ENCODE measurements at regions of chr20 and their contacts with region 1.

Region 1: DNA sequence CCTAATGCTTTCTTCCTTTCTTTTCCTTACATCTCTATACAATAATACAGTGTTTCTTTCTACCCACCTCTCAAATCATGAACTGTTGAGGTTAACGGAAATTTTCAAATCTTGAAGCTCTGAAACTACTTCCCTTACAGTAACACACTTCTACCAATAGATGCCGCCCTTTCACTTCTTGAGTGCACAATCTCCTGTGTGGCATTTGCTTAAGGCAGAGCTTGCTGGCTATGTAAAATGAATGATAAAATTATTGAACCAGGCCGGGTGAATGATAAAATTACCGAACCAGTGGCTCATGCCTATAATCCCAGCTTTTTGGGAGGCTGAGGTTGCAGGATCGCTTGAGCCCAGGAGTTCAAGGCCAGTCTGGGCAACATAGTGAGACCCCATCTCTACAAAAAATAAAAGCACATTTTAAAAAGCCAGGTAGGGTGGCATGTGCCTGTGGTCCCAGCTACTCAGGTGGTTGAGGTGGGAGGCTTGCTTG is 56.8 kb downstream of the KCNS1 start:
- DNase-seq: peak; percentile 57
- ATAC-seq: peak; percentile 80
- H3K4me3 ChIP-seq: no peak overlapping the region
- H3K27ac ChIP-seq: no peak overlapping the region
- H3K4me1 ChIP-seq: peaks cover 14 to 19% of the 10 kb centered on the region in 2 experiments
- H3K27me3 ChIP-seq: no peaks in the 10 kb centered on the region
- CTCF ChIP-seq: peak; percentile 76 to 89 (median 83)
- POLR2A ChIP-seq: no peak
- RAD21 ChIP-seq: peak; percentile 84

Region 2: DNA sequence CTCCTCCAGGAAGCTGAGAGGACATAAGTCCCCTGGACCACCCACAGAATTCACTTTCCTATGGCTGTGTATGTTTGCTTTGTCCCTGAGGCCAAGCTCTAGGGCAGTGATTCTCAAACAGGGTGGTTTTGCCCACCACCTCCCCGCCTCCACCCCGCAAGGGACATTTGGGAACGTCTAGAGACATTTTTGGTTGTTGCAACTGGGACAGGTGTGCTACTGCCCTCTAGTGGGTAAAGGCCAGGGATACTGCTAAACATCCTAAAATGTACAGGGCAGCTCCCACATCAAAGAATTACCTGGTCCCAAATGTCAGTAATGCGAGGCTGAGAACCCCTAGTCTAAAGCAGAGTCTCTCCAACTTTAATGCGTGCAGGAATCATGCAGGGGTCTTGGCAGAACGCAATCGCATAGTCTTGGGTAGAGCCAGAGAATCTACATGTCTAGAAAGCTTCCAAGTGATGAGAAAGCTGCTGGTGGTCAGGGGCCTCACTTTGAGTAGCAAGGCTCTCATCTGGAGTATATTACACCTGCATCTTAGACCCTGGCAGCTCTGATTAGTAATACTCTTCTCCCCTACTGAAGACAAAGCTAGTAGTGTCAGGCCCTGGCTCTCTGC is 51.7 kb after region 1 on chr20:
- CTCF ChIA-PET with region 1: interaction called, 92 read pairs
- POLR2A ChIA-PET with region 1: no interaction called
- RAD21 ChIA-PET with region 1: interaction called, 7 to 12 read pairs
- intact Hi-C with region 1: loop called (anchors 1 kb)
- DNase-seq: peak; percentile 41
- ATAC-seq: peak; percentile 85
- H3K4me3 ChIP-seq: no peak overlapping the region
- H3K27ac ChIP-seq: no peak overlapping the region
- H3K4me1 ChIP-seq: no peaks in the 10 kb centered on the region
- H3K27me3 ChIP-seq: no peaks in the 10 kb centered on the region
- CTCF ChIP-seq: peak; percentile 68 to 81 (median 74)
- POLR2A ChIP-seq: no peak
- RAD21 ChIP-seq: peak; percentile 83

Region 3: GRCh38 chr20:45111799-45112471 is 67.8 kb after region 1 on chr20:
- CTCF ChIA-PET with region 1: interaction called, 51 read pairs
- POLR2A ChIA-PET with region 1: no interaction called
- RAD21 ChIA-PET with region 1: interaction called, 3 read pairs
- intact Hi-C with region 1: no loop called
- DNase-seq: no peak
- ATAC-seq: peak; percentile 79
- H3K4me3 ChIP-seq: no peak overlapping the region
- H3K27ac ChIP-seq: no peak overlapping the region
- H3K4me1 ChIP-seq: 0 out of 4 replicates have a peak, but pooled peaks cover 0 to 3% of the 10 kb centered on the region in 2 experiments
- H3K27me3 ChIP-seq: no peaks in the 10 kb centered on the region; the same call in 1 of the 2 replicates
- CTCF ChIP-seq: peak; percentile 42 to 80 (median 45); a peak in 5 of 6 replicates
- POLR2A ChIP-seq: no peak
- RAD21 ChIP-seq: peak; percentile 56; the same call in 1 of the 2 replicates

Region 4: DNA sequence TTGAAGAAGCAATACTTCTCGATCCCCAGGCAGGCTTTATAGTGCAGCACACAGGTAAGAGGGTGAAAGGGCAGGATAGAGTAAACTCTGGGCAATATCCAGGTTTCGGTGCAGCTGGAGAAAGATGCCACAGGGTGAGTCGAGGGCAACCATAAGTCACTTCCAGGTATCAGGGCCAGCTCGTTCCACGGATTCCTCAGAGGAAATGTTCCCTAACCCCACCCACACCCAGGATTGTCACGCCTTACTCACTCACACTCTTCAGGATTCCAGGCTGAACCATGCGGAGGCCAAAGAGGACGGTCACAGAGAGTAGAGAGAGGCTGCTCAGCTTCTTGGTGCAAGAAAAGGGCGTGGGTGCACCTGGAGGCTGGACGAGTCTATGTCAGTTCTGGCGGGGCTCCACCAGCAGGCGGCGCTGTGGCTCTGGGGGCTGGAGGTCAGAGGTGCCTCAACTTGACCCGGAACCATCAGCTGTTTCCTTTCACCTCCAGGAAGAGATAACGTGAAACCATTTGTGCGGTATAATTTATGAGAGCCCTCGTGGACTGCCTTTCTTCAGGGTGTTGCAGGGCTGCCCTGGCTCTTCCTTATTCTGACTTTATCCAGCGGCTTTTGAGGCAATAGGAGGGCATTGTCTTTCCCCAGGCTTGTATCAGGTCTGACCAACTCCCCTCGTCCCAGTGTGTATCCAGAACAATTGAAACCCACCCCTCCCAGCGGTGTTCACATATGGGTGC is 94.6 kb after region 1 on chr20:
- CTCF ChIA-PET with region 1: interaction called, 18 read pairs
- POLR2A ChIA-PET with region 1: no interaction called
- RAD21 ChIA-PET with region 1: interaction called in 1 of 2 experiments, 3 read pairs
- intact Hi-C with region 1: no loop called
- DNase-seq: peak; percentile 21
- ATAC-seq: peak; percentile 99
- H3K4me3 ChIP-seq: no peak overlapping the region
- H3K27ac ChIP-seq: no peak overlapping the region
- H3K4me1 ChIP-seq: peaks cover 0 to 7% of the 10 kb centered on the region in 2 experiments; a peak in 2 of 4 replicates
- H3K27me3 ChIP-seq: no peaks in the 10 kb centered on the region
- CTCF ChIP-seq: peak; percentile 80 to 97 (median 95)
- POLR2A ChIP-seq: peak; percentile 31
- RAD21 ChIP-seq: peak; percentile 75

Region 5: DNA sequence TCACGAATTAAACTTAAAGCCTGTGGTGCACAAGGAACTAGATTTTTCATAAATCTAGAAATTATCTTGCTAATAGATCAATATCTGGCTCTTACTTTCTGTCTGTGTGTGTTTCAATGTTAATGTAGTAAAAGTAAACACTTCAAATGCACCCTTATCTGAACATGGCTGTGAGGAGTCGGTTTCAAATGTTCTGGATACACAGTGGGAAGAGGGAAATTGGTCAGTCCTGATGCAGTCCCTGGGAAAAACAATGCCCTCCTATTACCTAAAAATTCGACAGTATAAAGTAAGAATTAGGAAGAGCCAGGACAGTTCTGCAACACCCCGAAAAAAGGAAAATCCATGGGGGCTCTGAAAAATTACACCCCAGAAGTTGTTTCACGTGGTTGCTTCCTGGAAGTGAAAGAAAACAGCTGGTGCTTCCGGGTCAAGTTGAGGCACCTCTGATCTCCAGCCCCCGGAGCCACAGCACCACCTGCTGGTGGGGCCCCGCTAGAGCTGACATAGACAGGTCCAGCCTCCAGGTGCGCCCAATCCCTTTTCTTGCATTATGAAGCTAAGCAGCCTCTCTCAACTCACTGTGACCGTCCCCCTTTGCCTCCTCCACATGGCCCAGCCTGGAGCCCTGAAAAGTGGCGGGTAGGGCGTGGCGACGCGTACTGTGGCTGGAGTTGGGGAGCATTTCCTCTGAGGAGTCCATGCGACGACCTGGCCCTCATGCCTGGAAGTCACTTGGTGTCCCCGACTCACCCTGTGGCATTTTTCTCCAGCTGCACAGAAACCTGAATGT is 185.3 kb after region 1 on chr20:
- CTCF ChIA-PET with region 1: interaction called, 12 read pairs
- POLR2A ChIA-PET with region 1: no interaction called
- RAD21 ChIA-PET with region 1: interaction called in 1 of 2 experiments, 3 read pairs
- intact Hi-C with region 1: loop called (anchors 10 kb)
- DNase-seq: peak; percentile 60
- ATAC-seq: peak; percentile 100
- H3K4me3 ChIP-seq: peak overlapping the region; percentile 20 to 35
- H3K27ac ChIP-seq: no peak overlapping the region
- H3K4me1 ChIP-seq: peaks cover 0 to 6% of the 10 kb centered on the region in 2 experiments; a peak in 2 of 4 replicates
- H3K27me3 ChIP-seq: peaks cover 9% of the 10 kb centered on the region
- CTCF ChIP-seq: peak; percentile 85 to 98 (median 97)
- POLR2A ChIP-seq: no peak
- RAD21 ChIP-seq: peak; percentile 85

Region 6: DNA sequence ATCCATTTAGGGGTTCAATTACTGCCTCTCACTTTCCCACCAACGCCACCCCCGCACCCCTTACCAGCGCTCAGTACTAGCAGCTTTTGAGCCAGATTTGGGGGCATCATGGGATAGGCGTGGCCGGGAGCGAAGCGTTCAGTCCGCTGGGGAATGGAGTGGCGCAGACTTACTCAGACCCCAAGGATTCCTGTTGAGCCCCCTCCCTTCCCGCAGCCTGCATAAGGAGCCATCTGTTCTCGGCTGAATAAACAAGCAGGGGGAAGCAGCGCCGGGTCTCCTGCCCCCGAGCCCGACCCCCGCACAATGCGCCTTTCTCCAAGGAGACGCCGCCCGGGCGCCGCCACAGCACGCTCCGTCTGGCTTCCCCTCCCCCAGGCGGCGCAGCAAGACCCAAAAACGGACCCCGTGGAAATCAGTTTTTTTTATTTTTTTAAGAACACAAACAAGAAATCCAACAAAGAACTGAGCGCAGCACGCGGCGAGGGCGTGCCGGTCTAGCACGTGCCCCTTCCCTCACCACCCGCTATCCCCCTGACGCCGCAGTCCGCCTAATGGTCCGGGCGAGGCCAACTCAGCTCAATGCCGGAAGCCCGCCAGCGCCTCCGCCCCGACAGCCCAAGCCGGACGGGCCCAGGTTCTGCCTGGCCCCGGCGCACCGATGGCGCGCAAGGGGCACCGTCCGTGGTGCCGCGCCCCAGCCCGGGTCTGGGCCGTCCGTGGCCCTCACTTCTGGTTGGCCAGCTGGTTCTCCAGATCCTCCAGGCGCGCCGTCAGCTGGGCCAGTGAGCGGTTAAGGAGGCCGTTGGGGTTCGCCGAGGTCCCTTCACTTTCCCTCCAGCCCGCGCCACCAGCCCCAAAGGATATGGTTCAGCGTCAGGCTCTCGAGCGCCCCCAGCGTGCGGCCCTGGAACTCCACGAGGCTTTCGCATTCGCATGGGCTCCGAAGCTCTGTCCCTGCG is 249.2 kb after region 1 on chr20:
- CTCF ChIA-PET with region 1: interaction called, 20 read pairs
- POLR2A ChIA-PET with region 1: no interaction called
- RAD21 ChIA-PET with region 1: interaction called, 5 to 6 read pairs
- intact Hi-C with region 1: loop called (anchors 2 kb)
- DNase-seq: peak; percentile 26
- ATAC-seq: peak; percentile 91
- H3K4me3 ChIP-seq: peak overlapping the region; percentile 32 to 59
- H3K27ac ChIP-seq: peak overlapping the region; percentile 23; the same call in 1 of the 2 replicates
- H3K4me1 ChIP-seq: peaks cover 0 to 12% of the 10 kb centered on the region in 2 experiments; a peak in 2 of 4 replicates
- H3K27me3 ChIP-seq: no peaks in the 10 kb centered on the region
- CTCF ChIP-seq: peak; percentile 40 to 97 (median 94); a peak in 5 of 6 replicates
- POLR2A ChIP-seq: no peak
- RAD21 ChIP-seq: no peak

Region 7: DNA sequence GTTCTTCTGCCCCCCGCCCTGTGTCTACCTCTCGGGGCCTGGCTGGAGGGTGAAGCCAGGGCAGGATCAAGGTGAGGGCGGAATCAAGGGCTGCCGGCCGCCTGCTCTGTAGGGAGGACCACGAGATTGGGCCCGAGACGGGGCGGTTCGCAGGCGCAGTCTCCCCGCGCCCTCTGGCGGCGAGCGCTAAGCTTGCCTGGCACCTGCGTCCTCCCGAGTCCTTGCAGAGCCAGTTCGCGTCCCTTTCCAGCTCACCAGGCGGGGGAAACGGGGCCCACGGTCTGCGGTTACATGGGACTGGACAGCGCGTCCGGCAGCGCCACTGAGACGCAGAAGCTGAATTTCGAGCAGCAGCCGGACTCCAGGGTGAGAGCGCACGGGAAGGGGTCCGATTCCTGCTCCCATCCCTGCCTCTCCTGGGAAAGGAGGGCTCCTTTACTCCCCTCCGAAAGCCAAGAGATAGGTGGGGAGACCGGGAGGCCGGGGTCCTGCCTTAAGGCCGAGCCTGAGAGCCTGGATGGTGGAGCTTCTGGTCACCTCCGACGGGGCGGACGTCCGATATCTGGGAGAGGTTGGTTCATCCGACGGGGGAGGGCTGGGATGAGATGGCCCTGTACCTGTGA is 267.6 kb after region 1 on chr20:
- CTCF ChIA-PET with region 1: interaction called, 5 read pairs
- POLR2A ChIA-PET with region 1: no interaction called
- RAD21 ChIA-PET with region 1: interaction called in 1 of 2 experiments, 3 read pairs
- intact Hi-C with region 1: loop called (anchors 5 kb)
- DNase-seq: peak; percentile 47
- ATAC-seq: peak; percentile 97
- H3K4me3 ChIP-seq: no peak overlapping the region
- H3K27ac ChIP-seq: no peak overlapping the region
- H3K4me1 ChIP-seq: peaks cover 0 to 10% of the 10 kb centered on the region in 2 experiments; a peak in 2 of 4 replicates
- H3K27me3 ChIP-seq: no peaks in the 10 kb centered on the region
- CTCF ChIP-seq: peak; percentile 61 to 96 (median 84); a peak in 5 of 6 replicates
- POLR2A ChIP-seq: no peak
- RAD21 ChIP-seq: peak; percentile 75